ENCODE measurements at regions of chr2 and their contacts with region 1.

Region 1: DNA sequence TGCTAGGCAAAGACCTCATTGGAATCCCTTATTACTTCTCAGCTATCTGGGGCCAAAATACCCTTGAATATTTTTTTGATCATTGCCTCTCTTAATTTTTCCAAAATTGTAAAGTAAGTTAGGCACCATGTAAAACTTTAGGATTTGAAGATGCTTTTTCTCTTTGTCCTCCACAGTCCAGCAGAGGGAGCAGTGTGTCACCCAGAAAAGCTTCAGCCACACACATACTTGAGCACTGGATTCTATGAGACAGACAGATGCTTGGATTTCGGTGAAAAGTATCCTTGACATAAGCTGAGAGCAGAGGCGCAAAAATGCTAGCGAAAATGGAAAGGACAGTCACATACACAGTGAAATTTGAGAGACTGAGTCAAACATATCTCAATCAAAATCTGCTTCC is 74.7 kb upstream of the KCNJ3 start:
- DNase-seq: peak in 1 of 2 experiments; percentile 46
- H3K4me3 ChIP-seq: no peak overlapping the region
- H3K4me3 Mint-ChIP-seq: no peak overlapping the region
- H3K27ac Mint-ChIP-seq: no peak overlapping the region
- H3K4me1 ChIP-seq: no peaks in the 10 kb centered on the region
- H3K4me1 Mint-ChIP-seq: no peaks in the 10 kb centered on the region
- H3K27me3 ChIP-seq: no peaks in the 10 kb centered on the region
- H3K27me3 Mint-ChIP-seq: peaks cover 8% of the 10 kb centered on the region
- CTCF ChIP-seq: peak; percentile 83 to 85

Region 2: GRCh38 chr2:154195644-154196195 is 428.1 kb before region 1 on chr2:
- CTCF ChIA-PET with region 1: no interaction called
- POLR2A ChIA-PET with region 1: no interaction called
- intact Hi-C with region 1: no loop called
- DNase-seq: peak in 1 of 2 experiments; percentile 5
- H3K4me3 ChIP-seq: no peak overlapping the region
- H3K4me3 Mint-ChIP-seq: no peak overlapping the region
- H3K27ac Mint-ChIP-seq: peak overlapping the region; percentile 64
- H3K4me1 ChIP-seq: no peaks in the 10 kb centered on the region
- H3K4me1 Mint-ChIP-seq: no peaks in the 10 kb centered on the region
- H3K27me3 ChIP-seq: no peaks in the 10 kb centered on the region
- H3K27me3 Mint-ChIP-seq: no peaks in the 10 kb centered on the region
- CTCF ChIP-seq: peak in 1 of 2 experiments; percentile 11

Region 3: DNA sequence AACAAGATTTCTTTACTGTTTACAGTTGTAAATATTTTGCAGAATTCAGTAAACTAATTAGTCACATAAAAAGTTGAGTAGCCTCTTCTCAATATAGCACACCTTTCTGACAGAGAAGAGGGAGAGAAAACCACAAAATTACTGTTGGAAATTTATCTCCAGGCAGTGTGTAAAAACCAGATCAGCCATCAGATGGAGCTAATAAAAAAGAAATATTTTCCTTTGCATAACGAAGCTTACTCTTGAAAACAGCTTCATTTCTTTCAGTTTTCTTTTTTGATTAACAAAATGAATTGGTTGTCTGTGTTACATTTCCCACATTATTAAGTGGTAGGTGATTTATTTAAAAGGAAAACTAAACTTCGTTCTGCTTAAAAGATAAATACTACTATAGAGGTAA is 184.7 kb before region 1 on chr2:
- CTCF ChIA-PET with region 1: interaction called, 9 read pairs
- POLR2A ChIA-PET with region 1: interaction called, 3 read pairs
- intact Hi-C with region 1: loop called (anchors 2 kb)
- DNase-seq: no peak
- H3K4me3 ChIP-seq: no peak overlapping the region
- H3K4me3 Mint-ChIP-seq: no peak overlapping the region
- H3K27ac Mint-ChIP-seq: no peak overlapping the region
- H3K4me1 ChIP-seq: no peaks in the 10 kb centered on the region; the same call in 1 of the 2 replicates
- H3K4me1 Mint-ChIP-seq: no peaks in the 10 kb centered on the region
- H3K27me3 ChIP-seq: no peaks in the 10 kb centered on the region
- H3K27me3 Mint-ChIP-seq: no peaks in the 10 kb centered on the region
- CTCF ChIP-seq: peak in 1 of 2 experiments; percentile 30

Region 4: DNA sequence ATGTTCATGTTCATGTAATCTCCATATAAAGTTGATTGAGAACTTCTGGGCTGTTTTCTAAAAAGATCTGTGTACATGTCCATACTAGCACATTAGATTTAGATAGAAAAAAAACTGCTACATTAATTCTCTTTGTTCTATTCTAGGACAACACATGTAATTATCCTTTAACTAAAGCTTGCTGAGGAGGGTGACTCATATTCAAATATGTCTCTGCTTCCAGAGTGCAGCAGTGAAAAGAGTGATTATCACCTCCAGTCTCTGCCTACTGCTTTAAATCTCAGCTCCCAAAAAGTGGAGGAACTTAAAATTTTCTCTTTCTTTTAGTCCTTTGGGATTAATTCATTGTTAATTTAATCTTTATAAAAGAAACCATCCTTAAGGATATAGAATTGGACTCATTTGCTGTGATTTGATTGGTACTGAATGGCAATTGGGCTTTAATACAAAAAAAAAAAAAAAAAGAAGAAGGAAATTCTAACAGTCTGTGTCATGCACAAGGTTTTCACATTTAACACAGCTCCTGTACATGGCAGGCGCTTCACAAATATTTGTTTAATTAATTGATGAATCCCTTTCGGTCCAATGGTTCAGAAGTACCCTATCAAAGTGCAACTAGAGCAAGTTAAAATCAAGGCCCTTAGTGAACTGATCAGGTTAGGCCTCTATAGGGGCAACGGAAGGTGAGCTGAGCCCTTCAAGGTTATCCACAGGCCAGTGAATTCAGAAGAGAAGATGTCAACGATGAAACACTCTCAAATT is 139.3 kb before region 1 on chr2:
- CTCF ChIA-PET with region 1: no interaction called
- POLR2A ChIA-PET with region 1: no interaction called
- intact Hi-C with region 1: no loop called
- DNase-seq: no peak
- H3K4me3 ChIP-seq: no peak overlapping the region
- H3K4me3 Mint-ChIP-seq: no peak overlapping the region
- H3K27ac Mint-ChIP-seq: no peak overlapping the region
- H3K4me1 ChIP-seq: peaks cover 6% of the 10 kb centered on the region; the same call in 1 of the 2 replicates
- H3K4me1 Mint-ChIP-seq: no peaks in the 10 kb centered on the region
- H3K27me3 ChIP-seq: no peaks in the 10 kb centered on the region
- H3K27me3 Mint-ChIP-seq: no peaks in the 10 kb centered on the region
- CTCF ChIP-seq: no peak

Region 5: DNA sequence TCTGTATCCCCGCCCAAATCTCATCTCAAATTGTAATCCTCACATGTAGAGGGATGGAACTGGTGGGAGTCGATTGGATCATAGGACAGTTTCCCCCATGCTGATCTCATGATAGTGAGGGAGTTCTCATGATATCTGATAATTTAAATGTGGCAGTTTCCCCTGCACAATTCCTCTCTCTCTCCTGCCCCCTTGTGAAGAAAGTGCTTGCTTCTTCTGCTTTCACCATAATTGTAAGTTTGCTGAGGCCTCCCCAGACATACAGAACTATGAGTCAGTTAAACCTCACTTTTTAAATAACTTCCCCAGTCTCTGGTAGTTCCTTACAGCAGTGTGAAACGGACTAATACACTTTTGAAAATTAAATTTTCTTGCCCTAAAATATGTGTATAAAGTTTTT is 62.4 kb after region 1 on chr2:
- CTCF ChIA-PET with region 1: no interaction called
- POLR2A ChIA-PET with region 1: no interaction called
- intact Hi-C with region 1: loop called (anchors 5 kb)
- DNase-seq: no peak
- H3K4me3 ChIP-seq: no peak overlapping the region
- H3K4me3 Mint-ChIP-seq: no peak overlapping the region
- H3K27ac Mint-ChIP-seq: no peak overlapping the region
- H3K4me1 ChIP-seq: no peaks in the 10 kb centered on the region
- H3K4me1 Mint-ChIP-seq: no peaks in the 10 kb centered on the region
- H3K27me3 ChIP-seq: no peaks in the 10 kb centered on the region; the same call in 1 of the 2 replicates
- H3K27me3 Mint-ChIP-seq: peaks cover 14% of the 10 kb centered on the region
- CTCF ChIP-seq: no peak

Region 6: DNA sequence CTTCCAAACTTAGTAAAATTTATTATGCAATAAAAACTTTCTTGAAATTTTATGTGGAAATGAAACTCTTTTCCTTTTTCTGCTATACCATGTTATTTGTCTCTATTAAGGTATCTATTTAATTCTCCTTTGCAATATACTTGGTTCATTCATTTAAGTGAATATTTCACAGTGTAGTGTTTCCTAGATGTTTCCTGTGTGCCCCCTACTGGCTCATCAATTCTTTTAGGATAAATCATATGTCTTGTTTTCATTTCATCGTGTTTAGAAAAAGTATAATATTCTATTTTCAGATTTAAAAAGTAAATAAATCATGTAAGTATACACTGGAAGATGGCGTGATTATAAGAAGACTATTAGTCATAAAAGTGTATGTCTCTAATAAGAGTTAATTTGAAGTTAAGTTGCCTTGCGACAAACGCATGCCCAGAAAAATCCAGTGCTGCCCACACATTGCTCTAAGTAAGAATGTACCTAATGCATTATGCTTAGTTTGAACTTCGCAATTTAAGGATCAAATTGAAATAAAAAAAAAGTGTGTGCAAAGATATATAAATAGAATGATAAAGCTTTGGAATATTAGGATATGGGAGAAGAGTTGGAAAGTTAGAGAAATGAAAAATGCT is 600.1 kb after region 1 on chr2:
- CTCF ChIA-PET with region 1: no interaction called
- POLR2A ChIA-PET with region 1: no interaction called
- intact Hi-C with region 1: loop called (anchors 1 kb)
- DNase-seq: no peak
- H3K4me3 ChIP-seq: no peak overlapping the region
- H3K4me3 Mint-ChIP-seq: no peak overlapping the region
- H3K27ac Mint-ChIP-seq: no peak overlapping the region
- H3K4me1 ChIP-seq: no peaks in the 10 kb centered on the region
- H3K4me1 Mint-ChIP-seq: no peaks in the 10 kb centered on the region
- H3K27me3 ChIP-seq: no peaks in the 10 kb centered on the region
- H3K27me3 Mint-ChIP-seq: no peaks in the 10 kb centered on the region
- CTCF ChIP-seq: peak; percentile 39 to 50

Region 7: GRCh38 chr2:155310589-155310988 is 686.8 kb after region 1 on chr2:
- CTCF ChIA-PET with region 1: interaction called, 6 read pairs
- POLR2A ChIA-PET with region 1: no interaction called
- intact Hi-C with region 1: loop called (anchors 1 kb)
- DNase-seq: no peak
- H3K4me3 ChIP-seq: no peak overlapping the region
- H3K4me3 Mint-ChIP-seq: no peak overlapping the region
- H3K27ac Mint-ChIP-seq: no peak overlapping the region
- H3K4me1 ChIP-seq: no peaks in the 10 kb centered on the region
- H3K4me1 Mint-ChIP-seq: no peaks in the 10 kb centered on the region
- H3K27me3 ChIP-seq: no peaks in the 10 kb centered on the region
- H3K27me3 Mint-ChIP-seq: no peaks in the 10 kb centered on the region
- CTCF ChIP-seq: peak; percentile 44 to 66